Gastrocnemius medialis (tissue), 4 donors: ENCODE measurements at regions of chr7 and their contacts with region 1.

Region 1: GRCh38 chr7:70316786-70317755 is 718.8 kb downstream of the AUTS2 start:
- DNase-seq: no peak
- ATAC-seq: no peak
- H3K4me3 ChIP-seq: no peak overlapping the region
- H3K27ac ChIP-seq: no peak overlapping the region
- H3K4me1 ChIP-seq: no peaks in the 10 kb centered on the region
- H3K27me3 ChIP-seq: no peaks in the 10 kb centered on the region
- CTCF ChIP-seq: no peak
- POLR2A ChIP-seq: no peak

Region 2: DNA sequence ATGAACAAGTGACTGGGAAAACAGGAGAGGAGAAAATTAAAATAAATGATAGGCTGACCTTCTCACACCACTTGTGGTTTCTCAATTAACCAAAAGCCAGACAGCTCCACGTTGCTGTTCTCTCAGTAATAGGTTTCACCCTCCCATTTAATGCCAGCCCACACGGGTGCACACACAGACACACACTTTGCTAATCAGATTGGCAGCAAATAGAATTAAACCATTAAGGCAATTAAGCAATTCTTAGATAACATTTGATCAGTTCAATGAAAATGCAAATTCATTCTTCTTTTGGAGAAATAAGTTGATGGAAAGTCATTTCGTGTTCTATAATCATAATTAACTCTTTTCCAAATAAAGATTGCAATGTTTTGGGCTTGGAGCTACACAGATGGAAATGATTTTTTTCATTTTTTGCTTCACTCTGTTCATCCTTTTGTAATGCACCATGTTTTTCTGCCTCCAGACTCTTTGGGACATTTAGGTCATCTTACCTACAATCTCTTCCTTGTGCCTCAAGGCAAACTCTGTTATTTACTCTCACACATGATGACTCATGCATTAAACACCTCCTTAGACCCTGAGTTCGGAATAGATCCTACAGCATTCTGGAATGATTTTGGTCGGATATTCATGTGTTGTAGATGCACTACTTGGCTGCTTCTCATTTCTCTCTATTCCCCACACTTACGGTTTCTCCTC is 18.1 kb before region 1 on chr7:
- in situ Hi-C with region 1: no loop called
- intact Hi-C with region 1: loop called (anchors 1 kb)
- DNase-seq: no peak
- ATAC-seq: no peak
- H3K4me3 ChIP-seq: no peak overlapping the region
- H3K27ac ChIP-seq: no peak overlapping the region
- H3K4me1 ChIP-seq: no peaks in the 10 kb centered on the region
- H3K27me3 ChIP-seq: no peaks in the 10 kb centered on the region
- CTCF ChIP-seq: no peak
- POLR2A ChIP-seq: no peak